ENCODE measurements at regions of chr2 and their contacts with region 1.

Region 1: GRCh38 chr2:43611987-43612894 is 16.4 kb upstream of the THADA start:
- DNase-seq: peak; percentile 89
- ATAC-seq: peak; percentile 71
- H3K4me3 ChIP-seq: no peak overlapping the region
- H3K27ac ChIP-seq: no peak overlapping the region
- H3K4me1 ChIP-seq: peaks cover 10% of the 10 kb centered on the region
- H3K27me3 ChIP-seq: no peaks in the 10 kb centered on the region
- CTCF ChIP-seq: peak; percentile 89

Region 2: DNA sequence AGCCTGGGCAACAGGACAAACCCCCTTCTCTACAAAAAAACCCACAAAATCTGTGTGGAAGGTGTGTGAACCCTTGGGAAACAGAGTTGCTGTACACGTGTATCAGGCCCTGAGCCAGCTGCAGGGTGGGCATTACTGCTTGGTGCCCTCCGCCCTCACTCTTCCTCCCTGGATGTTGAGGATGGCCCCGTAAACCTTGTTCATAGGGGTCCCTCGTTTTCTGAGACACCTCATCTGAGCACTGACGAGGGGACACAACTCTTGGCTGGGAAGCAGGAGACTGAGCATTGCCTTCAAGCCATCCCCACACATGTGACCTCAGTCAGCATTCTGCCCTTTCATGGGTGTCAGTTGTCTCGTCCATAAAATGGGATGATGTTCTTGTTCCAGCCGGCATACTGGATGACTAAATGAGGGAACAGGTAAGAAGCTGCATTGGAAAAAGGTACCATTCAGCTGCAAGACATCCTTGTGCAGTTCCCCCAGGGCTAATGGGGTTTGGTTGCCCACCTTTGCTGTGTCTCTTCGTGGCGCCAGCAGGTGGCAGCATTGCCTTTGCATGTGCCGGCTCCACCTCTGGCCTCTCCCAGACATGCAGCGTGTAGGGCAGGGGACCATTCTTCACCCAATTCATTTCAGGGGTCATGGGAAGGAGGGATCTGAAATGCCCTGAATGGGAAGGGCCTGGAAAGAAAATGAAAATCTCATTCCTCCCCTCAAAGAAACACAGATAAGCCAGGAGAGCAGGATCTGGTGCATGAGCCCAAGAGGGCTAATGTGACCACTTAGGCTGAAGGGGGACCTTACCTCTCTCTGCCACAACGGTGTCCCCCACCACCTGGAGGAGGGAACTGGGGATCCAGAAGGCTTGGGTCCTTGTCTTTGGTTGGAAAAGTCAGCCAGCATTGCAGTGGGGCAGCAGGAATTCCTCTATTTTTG is 783.5 kb before region 1 on chr2:
- CTCF ChIA-PET with region 1: no interaction called
- POLR2A ChIA-PET with region 1: no interaction called
- intact Hi-C with region 1: loop called (anchors 5 kb)
- DNase-seq: peak; percentile 76
- ATAC-seq: peak; percentile 75
- H3K4me3 ChIP-seq: no peak overlapping the region
- H3K27ac ChIP-seq: no peak overlapping the region
- H3K4me1 ChIP-seq: peaks cover 12% of the 10 kb centered on the region
- H3K27me3 ChIP-seq: no peaks in the 10 kb centered on the region
- CTCF ChIP-seq: peak; percentile 93

Region 3: DNA sequence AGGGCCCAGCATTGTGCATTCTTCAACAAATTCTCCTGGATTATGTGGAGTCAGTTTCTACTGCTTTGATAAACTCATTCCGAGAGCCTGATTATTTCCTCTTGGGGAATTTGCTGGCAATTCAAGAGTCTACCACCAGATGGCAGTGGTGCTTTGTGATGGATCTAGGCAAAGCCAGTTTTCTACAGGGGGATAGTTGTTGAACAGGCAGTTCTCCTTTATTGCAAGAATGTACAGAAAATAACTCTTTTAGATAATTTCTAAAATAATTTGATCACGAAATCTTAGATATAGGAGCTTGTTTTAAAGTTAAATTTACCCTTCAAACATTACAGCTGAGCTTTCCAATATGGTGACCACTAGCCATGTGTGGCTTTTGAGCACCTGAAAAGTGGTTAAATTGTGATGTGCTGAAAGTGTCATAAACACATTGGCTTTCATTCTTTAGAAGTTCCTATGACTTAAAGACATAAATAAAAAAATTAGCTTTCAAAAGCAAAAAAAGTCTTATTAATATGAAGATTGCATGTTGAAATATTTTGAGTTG is 753.2 kb before region 1 on chr2:
- CTCF ChIA-PET with region 1: no interaction called
- POLR2A ChIA-PET with region 1: no interaction called
- intact Hi-C with region 1: loop called (anchors 1 kb)
- DNase-seq: peak; percentile 90
- ATAC-seq: peak; percentile 45; the same call in 1 of the 2 replicates
- H3K4me3 ChIP-seq: no peak overlapping the region
- H3K27ac ChIP-seq: no peak overlapping the region
- H3K4me1 ChIP-seq: no peaks in the 10 kb centered on the region
- H3K27me3 ChIP-seq: no peaks in the 10 kb centered on the region
- CTCF ChIP-seq: peak; percentile 97

Region 4: GRCh38 chr2:43576981-43577892 is 35.0 kb before region 1 on chr2:
- CTCF ChIA-PET with region 1: no interaction called
- POLR2A ChIA-PET with region 1: no interaction called
- intact Hi-C with region 1: no loop called
- DNase-seq: peak; percentile 51
- ATAC-seq: no peak
- H3K4me3 ChIP-seq: no peak overlapping the region
- H3K27ac ChIP-seq: no peak overlapping the region
- H3K4me1 ChIP-seq: no peaks in the 10 kb centered on the region
- H3K27me3 ChIP-seq: no peaks in the 10 kb centered on the region
- CTCF ChIP-seq: peak; percentile 88

Region 5: GRCh38 chr2:43707255-43708015 is 95.2 kb after region 1 on chr2:
- CTCF ChIA-PET with region 1: no interaction called
- POLR2A ChIA-PET with region 1: interaction called, 3 read pairs
- intact Hi-C with region 1: loop called (anchors 2 kb)
- DNase-seq: peak; percentile 86
- ATAC-seq: peak; percentile 94
- H3K4me3 ChIP-seq: no peak overlapping the region
- H3K27ac ChIP-seq: peak overlapping the region; percentile 87
- H3K4me1 ChIP-seq: peaks cover 37% of the 10 kb centered on the region
- H3K27me3 ChIP-seq: no peaks in the 10 kb centered on the region
- CTCF ChIP-seq: no peak

Region 6: GRCh38 chr2:43759195-43759594 is 147.0 kb after region 1 on chr2:
- CTCF ChIA-PET with region 1: no interaction called
- POLR2A ChIA-PET with region 1: no interaction called
- intact Hi-C with region 1: loop called (anchors 2 kb)
- DNase-seq: peak; percentile 91
- ATAC-seq: peak; percentile 96
- H3K4me3 ChIP-seq: no peak overlapping the region
- H3K27ac ChIP-seq: peak overlapping the region; percentile 96
- H3K4me1 ChIP-seq: peaks cover 42% of the 10 kb centered on the region
- H3K27me3 ChIP-seq: no peaks in the 10 kb centered on the region
- CTCF ChIP-seq: no peak

Region 7: GRCh38 chr2:43877782-43878464 is 265.7 kb after region 1 on chr2:
- CTCF ChIA-PET with region 1: no interaction called
- POLR2A ChIA-PET with region 1: no interaction called
- intact Hi-C with region 1: loop called (anchors 5 kb)
- DNase-seq: peak; percentile 81
- ATAC-seq: peak; percentile 87
- H3K4me3 ChIP-seq: no peak overlapping the region
- H3K27ac ChIP-seq: no peak overlapping the region
- H3K4me1 ChIP-seq: no peaks in the 10 kb centered on the region
- H3K27me3 ChIP-seq: no peaks in the 10 kb centered on the region
- CTCF ChIP-seq: peak; percentile 94

Measured in PC-3 (cell line).